Ascending aorta (tissue), 2 donors: ENCODE measurements at regions of chr15 and their contacts with region 1.

Region 1: GRCh38 chr15:30991255-30992072 is at the start of gene MTMR10:
- DNase-seq: peak in 1 of 2 donors; percentile 82
- H3K4me3 ChIP-seq: peak within 1 kb of the TSS; percentile 81 to 95
- H3K27ac ChIP-seq: peak within 1 kb of the TSS; percentile 83 to 96
- H3K4me1 ChIP-seq: peaks cover 5 to 6% of the 10 kb centered on the region in 2 donors
- H3K27me3 ChIP-seq: no peaks in the 10 kb centered on the region
- CTCF ChIP-seq: peak in 1 of 3 experiments; percentile 40
- total RNA-seq, gene MTMR10: 4.5 TPM

Region 2: DNA sequence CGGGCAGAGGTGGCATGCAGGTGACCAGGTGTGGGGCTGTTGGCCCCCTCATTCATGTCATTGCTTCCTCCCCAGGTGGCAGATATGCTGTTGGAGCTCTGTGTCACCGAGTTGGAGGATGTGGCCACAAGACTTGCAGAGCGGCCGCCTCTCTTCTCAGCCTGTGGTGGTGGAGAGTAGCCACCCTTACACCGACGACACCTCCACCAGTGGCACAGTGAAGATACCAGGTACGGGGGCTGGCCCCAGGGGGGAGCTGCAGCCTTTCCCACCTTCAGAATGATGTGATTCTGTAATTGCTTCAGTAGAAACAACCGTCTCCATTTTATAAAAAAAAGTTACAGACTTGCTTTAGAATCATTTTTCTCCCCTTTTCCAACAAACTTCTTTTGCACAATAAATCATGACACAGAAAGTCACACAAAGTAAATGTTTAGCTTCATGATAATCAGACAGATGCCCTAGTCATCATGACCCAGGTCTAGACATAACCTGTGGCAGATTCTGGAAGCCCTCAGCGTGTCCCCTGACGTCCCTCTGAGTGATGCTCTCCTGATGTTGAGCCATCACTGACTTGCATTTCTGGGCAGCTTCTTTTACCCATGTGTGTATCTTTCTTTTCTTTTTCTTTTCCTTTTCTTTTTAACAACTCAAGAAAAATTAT is 163.7 kb before region 1 on chr15:
- intact Hi-C with region 1: no loop called
- DNase-seq: no peak
- H3K4me3 ChIP-seq: no peak overlapping the region
- H3K27ac ChIP-seq: no peak overlapping the region
- H3K4me1 ChIP-seq: no peaks in the 10 kb centered on the region
- H3K27me3 ChIP-seq: no peaks in the 10 kb centered on the region
- CTCF ChIP-seq: no peak

Region 3: DNA sequence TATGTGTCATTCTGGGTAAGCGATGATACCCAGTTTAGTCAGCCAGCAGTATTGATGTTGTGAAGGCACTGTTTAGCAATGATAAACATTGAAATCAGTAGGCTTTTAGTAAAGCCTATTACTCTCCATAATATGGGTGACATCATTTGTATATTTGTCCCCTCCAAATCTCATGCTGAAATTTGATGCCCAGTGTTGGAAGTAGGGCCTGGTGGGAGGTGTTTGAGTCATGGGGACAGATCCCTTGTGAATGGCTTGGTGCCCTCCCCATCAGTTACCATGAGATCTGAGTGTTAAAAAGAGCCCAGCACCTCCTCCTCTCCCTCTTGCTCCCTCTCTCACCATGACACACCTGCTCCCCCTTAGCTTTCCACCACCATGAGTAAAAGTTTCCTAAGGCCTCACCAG is 119.1 kb before region 1 on chr15:
- intact Hi-C with region 1: no loop called
- DNase-seq: no peak
- H3K4me3 ChIP-seq: no peak overlapping the region
- H3K27ac ChIP-seq: no peak overlapping the region
- H3K4me1 ChIP-seq: no peaks in the 10 kb centered on the region
- H3K27me3 ChIP-seq: no peaks in the 10 kb centered on the region
- CTCF ChIP-seq: no peak

Region 4: DNA sequence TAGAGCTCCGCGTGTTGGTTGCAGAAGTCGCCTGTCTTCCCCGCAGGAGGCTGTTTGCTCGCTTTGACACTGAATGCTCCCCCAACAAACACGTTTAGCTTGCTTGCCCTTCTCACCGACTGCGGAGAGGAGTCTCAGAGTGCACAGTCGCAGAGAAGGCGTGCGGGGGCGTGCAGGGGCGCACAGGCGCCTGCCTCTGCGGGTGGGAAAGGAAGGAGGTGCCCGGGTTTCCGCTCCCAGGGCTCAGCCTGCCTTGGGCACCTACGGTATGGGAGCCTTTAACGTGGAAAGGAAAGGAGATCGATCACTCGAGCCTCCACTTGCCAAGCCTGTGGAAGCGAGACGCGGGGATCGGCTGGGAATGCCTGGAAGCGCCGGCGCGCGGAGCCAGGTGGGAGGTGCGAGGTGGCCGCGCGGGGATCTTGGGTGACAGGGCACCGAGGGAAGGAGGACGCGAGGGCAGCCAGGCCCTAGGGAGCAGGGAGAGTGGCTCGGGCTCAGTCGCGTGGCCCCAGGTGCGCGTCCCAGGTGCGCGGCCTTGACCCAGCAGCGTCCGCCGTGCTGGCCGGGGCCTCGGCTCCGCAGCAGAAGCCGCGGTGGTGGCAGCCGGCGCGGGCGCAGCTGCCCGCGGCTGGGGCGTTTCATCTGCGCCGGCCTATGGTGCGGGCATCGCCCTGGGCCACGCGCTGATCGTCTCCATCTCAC is 87.8 kb before region 1 on chr15 and contains the start of gene FAN1:
- intact Hi-C with region 1: loop called (anchors 5 kb)
- DNase-seq: peak; percentile 34 to 92
- H3K4me3 ChIP-seq: peak within 1 kb of the TSS; percentile 90 to 99
- H3K27ac ChIP-seq: peak within 1 kb of the TSS; percentile 61 to 77
- H3K4me1 ChIP-seq: peaks cover 0 to 8% of the 10 kb centered on the region in 2 donors
- H3K27me3 ChIP-seq: no peaks in the 10 kb centered on the region
- CTCF ChIP-seq: no peak
- total RNA-seq, gene FAN1: 12.1 TPM

Region 5: DNA sequence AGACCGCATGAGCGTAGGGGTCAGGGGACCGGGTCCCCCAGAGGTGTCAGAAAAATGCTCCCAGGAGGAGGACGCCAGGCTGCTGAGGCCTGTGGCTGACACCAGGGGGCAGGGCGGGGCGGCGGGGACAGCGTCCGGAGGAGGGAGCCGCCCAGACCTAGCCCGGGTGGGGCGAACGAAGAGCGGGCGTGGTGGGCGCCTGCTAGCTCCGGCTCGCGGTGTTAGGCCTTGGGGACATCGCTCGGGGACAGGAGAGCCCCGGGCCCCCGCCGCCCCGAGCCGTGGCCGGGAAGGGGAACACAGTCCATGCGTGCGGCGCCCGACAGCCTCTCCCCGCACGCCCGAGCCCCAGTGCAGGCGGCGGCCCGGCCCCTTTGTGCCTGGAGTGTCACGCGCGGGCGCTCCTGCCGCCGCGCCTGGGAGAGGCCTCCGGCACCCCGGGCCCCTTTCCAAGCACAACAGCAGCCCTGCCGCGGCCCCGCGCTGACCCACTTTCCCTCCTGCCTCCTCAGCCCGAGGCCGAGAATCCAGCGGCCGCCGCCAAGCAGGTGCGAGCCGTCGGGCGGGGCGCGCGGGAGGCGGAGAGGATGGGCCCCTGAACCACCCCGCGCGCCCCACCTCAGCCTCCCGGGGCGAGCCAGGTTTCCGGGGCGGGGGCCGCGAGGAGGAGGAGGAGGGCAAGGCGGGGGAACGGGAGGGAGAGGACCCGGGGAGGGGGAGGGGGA is 224.2 kb after region 1 on chr15:
- intact Hi-C with region 1: loop called (anchors 5 kb)
- DNase-seq: peak; percentile 25 to 86
- H3K4me3 ChIP-seq: peak overlapping the region; percentile 63 to 76
- H3K27ac ChIP-seq: peak overlapping the region; percentile 87 to 91
- H3K4me1 ChIP-seq: peaks cover 10 to 14% of the 10 kb centered on the region in 2 donors
- H3K27me3 ChIP-seq: no peaks in the 10 kb centered on the region
- CTCF ChIP-seq: peak; percentile 83 to 90 (median 88)

Region 6: GRCh38 chr15:31236184-31237042 is 244.9 kb after region 1 on chr15:
- intact Hi-C with region 1: loop called (anchors 5 kb)
- DNase-seq: peak; percentile 46 to 92
- H3K4me3 ChIP-seq: peak overlapping the region in 1 of 2 donors; percentile 56
- H3K27ac ChIP-seq: peak overlapping the region; percentile 56 to 81
- H3K4me1 ChIP-seq: peaks cover 0 to 13% of the 10 kb centered on the region in 2 donors
- H3K27me3 ChIP-seq: no peaks in the 10 kb centered on the region
- CTCF ChIP-seq: no peak

Region 7: GRCh38 chr15:31391687-31392671 is 400.5 kb after region 1 on chr15:
- intact Hi-C with region 1: loop called (anchors 5 kb)
- DNase-seq: peak; percentile 67 to 94
- H3K4me3 ChIP-seq: peak overlapping the region; percentile 68 to 88
- H3K27ac ChIP-seq: peak overlapping the region; percentile 96 to 97
- H3K4me1 ChIP-seq: peaks cover 2 to 20% of the 10 kb centered on the region in 2 donors
- H3K27me3 ChIP-seq: no peaks in the 10 kb centered on the region
- CTCF ChIP-seq: no peak

Region 8: DNA sequence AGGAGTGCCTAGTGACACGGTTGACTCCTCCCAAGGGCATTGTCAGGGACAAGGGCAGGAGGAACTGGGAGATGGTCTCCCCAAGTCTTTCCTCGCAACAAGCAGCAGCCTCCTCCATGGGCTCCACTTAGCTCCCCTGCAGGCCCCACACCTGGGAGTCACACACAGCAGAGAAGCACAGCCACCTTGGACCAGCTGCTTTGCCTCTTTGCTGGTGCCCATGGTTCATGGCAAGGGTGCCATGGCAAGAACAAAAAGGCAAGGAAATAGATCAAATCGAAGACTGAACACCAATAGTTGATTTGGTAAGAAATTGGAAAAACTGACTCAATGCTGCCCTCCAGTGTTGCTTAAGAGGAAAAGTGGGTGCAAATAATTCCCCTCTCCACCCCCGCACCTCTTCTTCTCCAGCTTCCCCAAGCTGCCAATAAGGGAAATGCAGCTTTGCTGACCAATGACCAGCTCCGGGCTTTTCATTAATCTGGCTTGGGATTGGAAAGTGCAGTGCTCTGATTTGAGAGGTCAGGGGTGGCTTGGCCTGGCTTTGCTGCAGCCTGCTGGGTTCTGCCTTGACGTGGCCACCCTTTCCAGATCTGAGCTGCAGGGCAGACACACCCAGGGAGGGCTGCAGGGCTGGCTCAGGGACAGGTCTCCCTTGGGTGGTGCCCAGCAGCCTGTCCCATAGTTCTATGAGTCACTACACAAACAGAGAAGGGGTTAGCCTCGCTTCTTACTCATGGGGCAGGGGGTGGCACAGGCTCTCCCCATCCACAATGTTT is 497.2 kb after region 1 on chr15:
- intact Hi-C with region 1: loop called (anchors 5 kb)
- DNase-seq: peak; percentile 26 to 86
- H3K4me3 ChIP-seq: no peak overlapping the region
- H3K27ac ChIP-seq: peak overlapping the region; percentile 76 to 81
- H3K4me1 ChIP-seq: peaks cover 10 to 23% of the 10 kb centered on the region in 2 donors
- H3K27me3 ChIP-seq: no peaks in the 10 kb centered on the region
- CTCF ChIP-seq: peak; percentile 84 to 91 (median 87)

Region 9: GRCh38 chr15:31870328-31871165 is 879.1 kb after region 1 on chr15:
- intact Hi-C with region 1: loop called (anchors 2 kb)
- DNase-seq: peak; percentile 35 to 87
- H3K4me3 ChIP-seq: peak within 1 kb of the TSS; percentile 74 to 75
- H3K27ac ChIP-seq: peak within 1 kb of the TSS; percentile 63 to 64
- H3K4me1 ChIP-seq: peaks cover 0 to 3% of the 10 kb centered on the region in 2 donors
- H3K27me3 ChIP-seq: no peaks in the 10 kb centered on the region
- CTCF ChIP-seq: no peak